ENCODE measurements at regions of chr6 and their contacts with region 1.

Region 1: GRCh38 chr6:144931172-144932035 is 646.3 kb downstream of the UTRN start:
- DNase-seq: peak in 1 of 4 donors; percentile 42
- ATAC-seq: peak; percentile 72
- H3K4me3 ChIP-seq: no peak overlapping the region
- H3K27ac ChIP-seq: no peak overlapping the region
- H3K4me1 ChIP-seq: no peaks in the 10 kb centered on the region
- H3K27me3 ChIP-seq: no peaks in the 10 kb centered on the region
- CTCF ChIP-seq: no peak

Region 2: DNA sequence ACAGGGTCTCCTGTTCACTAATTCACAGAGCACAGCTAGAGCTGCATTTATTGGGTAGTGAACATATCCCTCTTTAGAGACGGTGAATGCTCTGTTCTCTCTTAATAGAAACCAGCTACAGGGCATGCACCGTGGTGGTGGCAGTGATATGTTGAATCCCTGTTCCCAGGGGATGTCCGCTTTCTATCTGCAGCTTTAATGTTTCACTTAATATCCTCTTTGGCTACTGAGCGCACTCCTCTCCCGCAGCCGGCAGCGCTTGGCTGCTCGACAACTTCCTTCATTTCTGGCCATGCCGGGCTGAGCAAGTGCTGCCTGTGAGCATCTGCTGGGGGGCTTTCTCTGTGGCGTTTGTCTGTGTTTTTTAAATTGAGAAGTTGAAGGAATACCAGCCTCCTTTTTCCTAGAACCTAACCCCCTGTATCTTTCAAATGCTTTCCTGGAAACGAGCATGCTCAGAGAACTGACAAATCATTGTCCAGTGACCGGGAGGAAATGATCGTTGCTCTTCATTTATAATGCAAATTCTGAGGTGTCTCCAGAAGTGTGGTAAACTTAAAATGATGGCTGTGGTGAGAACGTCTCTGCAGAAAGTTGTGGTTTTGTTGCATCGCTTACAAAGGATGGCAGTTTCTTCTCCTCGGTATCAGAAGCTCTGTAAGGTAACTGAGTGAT is 348.3 kb before region 1 on chr6:
- intact Hi-C with region 1: loop called in 1 of 2 experiments (anchors 10 kb)
- DNase-seq: peak; percentile 42 to 84 (median 48)
- ATAC-seq: peak; percentile 57
- H3K4me3 ChIP-seq: peak overlapping the region in 1 of 2 donors; percentile 1
- H3K27ac ChIP-seq: no peak overlapping the region
- H3K4me1 ChIP-seq: peaks cover 10 to 22% of the 10 kb centered on the region in 2 donors
- H3K27me3 ChIP-seq: no peaks in the 10 kb centered on the region
- CTCF ChIP-seq: no peak

Region 3: GRCh38 chr6:145137426-145137825 is 206.0 kb after region 1 on chr6:
- intact Hi-C with region 1: no loop called
- DNase-seq: peak in 1 of 4 donors; percentile 7
- ATAC-seq: peak; percentile 34
- H3K4me3 ChIP-seq: no peak overlapping the region
- H3K27ac ChIP-seq: no peak overlapping the region
- H3K4me1 ChIP-seq: no peaks in the 10 kb centered on the region
- H3K27me3 ChIP-seq: no peaks in the 10 kb centered on the region
- CTCF ChIP-seq: no peak

Measured in left lung (tissue), 14 donors.